ENCODE measurements at regions of chr20 and their contacts with region 1.

Region 1: DNA sequence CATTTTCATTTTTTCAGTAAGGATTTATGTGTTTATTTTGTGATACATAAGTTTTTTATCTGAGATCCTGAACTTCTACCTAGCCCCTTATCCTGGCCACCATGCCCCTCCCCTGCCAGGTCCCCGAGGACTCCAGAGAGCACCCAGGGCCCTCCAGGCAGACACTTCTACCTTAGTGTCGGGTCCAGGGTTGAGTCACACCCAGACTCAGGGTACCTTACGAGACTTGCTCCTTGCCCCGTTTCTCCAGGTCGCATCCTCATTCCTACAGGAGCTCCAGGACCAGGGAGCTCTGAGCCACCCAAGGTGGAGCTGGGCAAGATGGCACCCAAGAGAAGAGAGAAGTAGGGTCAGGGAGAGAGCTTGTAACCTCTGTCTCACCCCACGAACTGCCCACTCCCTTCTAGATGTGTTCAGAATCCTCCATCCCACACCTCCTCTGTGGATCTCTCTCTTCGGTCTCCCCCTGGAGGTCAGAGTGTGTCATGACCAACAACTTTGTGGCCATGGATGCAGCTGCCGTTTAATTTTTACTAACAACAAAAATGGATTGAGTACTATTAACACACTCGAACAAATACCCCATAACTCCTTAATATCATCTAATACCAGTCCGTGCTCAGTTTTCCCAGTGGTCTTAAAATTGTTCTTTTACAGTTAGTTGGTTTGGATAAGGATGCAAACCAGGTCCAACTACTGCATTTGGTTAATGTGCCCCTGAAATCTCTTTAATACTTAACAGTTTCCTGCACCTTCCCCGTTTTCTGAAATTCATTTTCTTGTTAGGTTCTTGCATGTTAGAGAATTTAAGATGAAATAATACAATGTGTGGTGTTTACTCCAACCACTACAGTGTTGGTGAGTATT is 130.6 kb upstream of the INSM1 start:
- DNase-seq: peak; percentile 3
- H3K4me3 ChIP-seq: no peak overlapping the region
- H3K27ac ChIP-seq: no peak overlapping the region
- H3K27me3 ChIP-seq: peaks cover 8% of the 10 kb centered on the region
- CTCF ChIP-seq: peak; percentile 81

Region 2: GRCh38 chr20:19692685-19693119 is 544.6 kb before region 1 on chr20:
- CTCF ChIA-PET with region 1: interaction called, 15 read pairs
- POLR2A ChIA-PET with region 1: no interaction called
- DNase-seq: no peak
- H3K4me3 ChIP-seq: no peak overlapping the region
- H3K27ac ChIP-seq: no peak overlapping the region
- H3K27me3 ChIP-seq: no peaks in the 10 kb centered on the region
- CTCF ChIP-seq: peak; percentile 87

Region 3: DNA sequence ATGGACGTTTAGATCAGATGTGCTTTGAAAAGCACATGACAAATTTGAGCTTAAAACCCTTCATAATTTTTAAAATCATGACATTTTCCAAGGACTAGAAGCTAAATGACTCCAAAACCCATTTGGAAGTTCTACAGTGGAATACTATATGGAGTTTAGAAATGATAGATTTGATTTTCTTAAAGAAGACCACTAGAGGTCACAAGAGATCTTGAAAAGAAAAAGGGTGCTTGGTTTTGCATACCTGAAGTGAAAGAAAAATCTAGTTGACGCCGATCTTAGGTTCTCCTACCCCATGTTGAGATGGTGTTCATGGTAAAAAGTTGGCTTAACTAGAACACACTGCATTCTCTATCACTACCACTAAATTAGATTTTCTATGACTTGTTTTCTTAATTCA is 153.5 kb before region 1 on chr20:
- CTCF ChIA-PET with region 1: interaction called, 40 read pairs
- POLR2A ChIA-PET with region 1: no interaction called
- DNase-seq: no peak
- H3K4me3 ChIP-seq: no peak overlapping the region
- H3K27ac ChIP-seq: no peak overlapping the region
- H3K27me3 ChIP-seq: peaks cover 12% of the 10 kb centered on the region
- CTCF ChIP-seq: peak; percentile 46

Region 4: GRCh38 chr20:20215976-20216727 is 21.2 kb before region 1 on chr20:
- CTCF ChIA-PET with region 1: interaction called, 11 read pairs
- POLR2A ChIA-PET with region 1: no interaction called
- DNase-seq: no peak
- H3K4me3 ChIP-seq: no peak overlapping the region
- H3K27ac ChIP-seq: no peak overlapping the region
- H3K27me3 ChIP-seq: no peaks in the 10 kb centered on the region
- CTCF ChIP-seq: no peak